HEK293T (cell line): ENCODE measurements at regions of chr12 and their contacts with region 1.

Region 1: GRCh38 chr12:38921025-38921677 is 15.8 kb upstream of the CPNE8 start:
- DNase-seq: peak; percentile 41

Region 2: DNA sequence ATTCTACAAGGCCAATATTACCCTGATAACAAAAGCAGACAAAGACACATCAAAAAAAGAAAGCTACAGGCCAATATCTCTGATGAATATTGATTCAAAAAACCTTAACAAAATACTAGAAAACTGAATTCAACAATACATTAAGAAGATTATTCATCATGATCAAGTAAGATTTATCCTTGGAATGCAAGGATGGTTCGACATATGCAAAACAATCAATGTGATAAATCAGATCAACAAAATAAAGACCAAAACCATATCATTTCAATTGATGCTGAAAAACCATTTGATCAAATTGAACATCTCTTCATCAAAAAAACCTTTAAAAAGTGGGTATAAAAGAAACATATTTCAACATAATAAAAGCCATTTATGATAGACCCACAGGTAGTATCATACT is 133.0 kb before region 1 on chr12:
- CTCF ChIA-PET with region 1: no interaction called
- POLR2A ChIA-PET with region 1: no interaction called
- DNase-seq: no peak

Region 3: GRCh38 chr12:38906482-38907170 is 14.5 kb before region 1 on chr12:
- CTCF ChIA-PET with region 1: interaction called, 10 read pairs
- POLR2A ChIA-PET with region 1: interaction called, 8 read pairs
- DNase-seq: peak; percentile 80

Region 4: GRCh38 chr12:39103552-39104165 is 182.5 kb after region 1 on chr12:
- CTCF ChIA-PET with region 1: interaction called, 13 read pairs
- POLR2A ChIA-PET with region 1: no interaction called
- DNase-seq: peak; percentile 72

Region 5: GRCh38 chr12:39272871-39273770 is 352.0 kb after region 1 on chr12:
- CTCF ChIA-PET with region 1: interaction called, 12 read pairs
- POLR2A ChIA-PET with region 1: no interaction called
- DNase-seq: peak; percentile 39